Left ventricle myocardium superior (tissue), 1 donor: ENCODE measurements at regions of chr12 and their contacts with region 1.

Region 1: GRCh38 chr12:46209914-46210872 is 58.6 kb downstream of the SLC38A1 start:
- DNase-seq: peak; percentile 73
- ATAC-seq: peak; percentile 87

Region 2: GRCh38 chr12:46268590-46269558 is 58.7 kb after region 1 on chr12 and contains the start of gene SLC38A1:
- intact Hi-C with region 1: loop called (anchors 10 kb)
- DNase-seq: peak; percentile 92
- ATAC-seq: peak; percentile 84
- total RNA-seq, gene SLC38A1: 161 TPM